B cell (primary cell): ENCODE measurements at regions of chr2 and their contacts with region 1.

Region 1: DNA sequence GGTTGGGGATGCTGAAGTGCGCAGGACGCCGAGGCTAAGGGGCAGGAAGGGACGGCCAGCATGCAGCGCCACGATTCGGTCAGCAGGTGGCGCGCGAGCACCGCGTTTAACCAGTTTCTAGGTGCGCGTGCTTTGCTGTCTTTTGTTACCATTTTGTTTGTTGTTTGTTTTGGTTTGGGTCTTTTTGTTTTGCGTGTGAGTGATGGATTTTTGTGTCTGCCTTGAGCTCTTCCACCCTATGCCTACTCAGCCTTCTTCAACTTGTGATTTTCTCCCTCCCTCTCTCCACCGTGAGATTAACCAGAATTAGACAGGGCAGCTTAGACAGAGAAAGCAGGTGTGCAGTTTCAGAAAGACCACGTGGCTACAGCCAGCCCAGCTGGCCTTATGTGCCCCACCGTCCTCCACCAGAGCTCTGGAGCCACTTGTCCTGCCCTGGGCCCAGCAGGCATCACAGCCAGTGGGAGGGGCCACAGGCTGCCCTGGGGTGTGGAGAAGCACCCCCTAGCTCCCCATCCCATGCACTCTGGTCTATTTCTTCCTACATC is 180.2 kb downstream of the RNF144A start:
- DNase-seq: peak; percentile 73
- ATAC-seq: peak; percentile 60
- H3K4me3 ChIP-seq: no peak overlapping the region
- H3K4me3 Mint-ChIP-seq: peak overlapping the region; percentile 38
- H3K27ac ChIP-seq: no peak overlapping the region
- H3K27ac Mint-ChIP-seq: no peak overlapping the region
- H3K4me1 ChIP-seq: peaks cover 4 to 5% of the 10 kb centered on the region in 2 donors
- H3K4me1 Mint-ChIP-seq: peaks cover 10% of the 10 kb centered on the region
- H3K27me3 ChIP-seq: peaks cover 0 to 3% (median 0%) of the 10 kb centered on the region in 4 experiments
- H3K27me3 Mint-ChIP-seq: peaks cover 22% of the 10 kb centered on the region
- CTCF ChIP-seq: peak; percentile 100

Region 2: DNA sequence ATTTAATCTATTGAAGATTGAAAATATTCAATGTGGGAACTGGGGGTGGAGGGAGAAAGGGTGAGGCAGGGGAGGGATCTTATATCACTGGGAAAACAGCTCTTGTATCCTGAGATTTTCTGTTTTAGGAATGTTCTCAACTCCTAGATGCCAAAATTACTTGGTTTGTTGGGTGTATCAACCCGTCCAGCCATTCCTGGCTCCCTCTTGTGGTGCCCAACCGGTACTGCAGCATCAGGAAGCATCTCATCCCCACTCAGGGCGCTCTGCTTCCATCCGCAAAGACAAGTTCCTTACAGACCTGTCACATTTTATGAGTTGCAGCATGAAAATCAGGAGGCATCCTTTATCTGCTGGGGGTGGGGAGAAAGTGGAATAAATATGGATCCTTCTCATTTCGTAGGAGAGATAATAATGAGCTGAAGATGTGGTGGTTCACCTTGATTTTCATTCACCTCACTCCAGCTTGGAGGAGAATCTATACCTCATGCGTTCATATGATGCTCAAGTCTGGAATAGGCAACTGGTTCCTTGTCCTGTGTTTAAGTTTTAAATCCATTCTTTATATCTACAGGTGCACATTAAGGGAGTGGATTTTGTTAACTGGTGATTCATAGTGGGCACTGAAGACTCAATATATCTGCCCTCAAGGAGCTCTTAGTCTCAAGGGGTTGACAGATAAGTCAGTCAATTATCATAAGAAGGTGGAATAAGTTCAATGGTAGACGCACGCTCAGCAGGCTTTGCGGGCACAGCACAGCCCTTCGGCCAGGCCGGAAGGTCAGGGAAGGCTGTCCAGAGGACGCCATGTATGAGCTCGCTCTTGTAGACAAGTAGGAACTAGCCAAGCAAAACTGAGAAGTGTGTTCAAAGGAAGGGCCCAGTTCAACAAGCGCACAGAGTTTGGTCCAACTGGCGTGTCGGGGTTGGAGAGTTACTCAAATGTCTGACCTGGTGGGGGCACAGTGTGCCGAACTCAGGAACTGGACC is 52.9 kb before region 1 on chr2:
- CTCF ChIA-PET with region 1: interaction called, 12 read pairs
- POLR2A ChIA-PET with region 1: no interaction called
- intact Hi-C with region 1: no loop called
- DNase-seq: peak; percentile 64
- ATAC-seq: peak; percentile 56
- H3K4me3 ChIP-seq: no peak overlapping the region
- H3K4me3 Mint-ChIP-seq: no peak overlapping the region
- H3K27ac ChIP-seq: no peak overlapping the region
- H3K27ac Mint-ChIP-seq: no peak overlapping the region
- H3K4me1 ChIP-seq: peaks cover 4 to 6% of the 10 kb centered on the region in 2 donors
- H3K4me1 Mint-ChIP-seq: peaks cover 7% of the 10 kb centered on the region
- H3K27me3 ChIP-seq: peaks cover 0 to 16% (median 7%) of the 10 kb centered on the region in 4 experiments
- H3K27me3 Mint-ChIP-seq: peaks cover 32% of the 10 kb centered on the region
- CTCF ChIP-seq: peak; percentile 98

Region 3: DNA sequence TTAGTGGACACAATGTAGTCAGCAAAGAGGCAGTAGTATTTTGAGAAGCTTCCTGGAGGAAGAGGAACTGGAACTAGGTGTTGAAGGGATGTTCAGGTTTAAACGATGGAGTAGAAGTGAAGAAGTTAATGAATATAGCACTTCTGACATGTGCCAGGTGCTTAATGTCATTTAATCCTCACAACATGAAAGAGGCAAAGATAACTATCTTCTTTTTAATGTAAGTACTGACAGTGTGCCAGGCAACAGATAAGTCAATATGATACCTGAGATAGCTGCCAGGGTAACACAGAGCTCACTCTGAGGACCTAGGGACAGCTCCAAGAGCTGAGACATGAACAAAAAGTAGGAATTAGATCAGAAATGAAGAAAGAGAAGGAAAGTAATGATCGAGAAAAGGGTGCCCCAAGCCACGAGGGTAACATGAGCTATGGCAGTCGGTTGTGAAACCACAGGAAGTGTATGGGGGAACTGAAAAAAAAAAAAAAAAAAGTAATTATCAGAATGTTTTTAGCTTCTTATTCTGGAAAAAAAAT is 39.5 kb before region 1 on chr2:
- CTCF ChIA-PET with region 1: interaction called, 10 read pairs
- POLR2A ChIA-PET with region 1: no interaction called
- intact Hi-C with region 1: no loop called
- DNase-seq: peak; percentile 47
- ATAC-seq: peak; percentile 72
- H3K4me3 ChIP-seq: peak overlapping the region in 3 of 5 experiments; percentile 22 to 36 (median 28)
- H3K4me3 Mint-ChIP-seq: peak overlapping the region; percentile 78
- H3K27ac ChIP-seq: peak overlapping the region in 1 of 2 donors; percentile 62
- H3K27ac Mint-ChIP-seq: peak overlapping the region; percentile 77
- H3K4me1 ChIP-seq: peaks cover 46 to 71% of the 10 kb centered on the region in 2 donors
- H3K4me1 Mint-ChIP-seq: peaks cover 24% of the 10 kb centered on the region
- H3K27me3 ChIP-seq: peaks cover 0 to 11% (median 4%) of the 10 kb centered on the region in 4 experiments
- H3K27me3 Mint-ChIP-seq: peaks cover under 1% of the 10 kb centered on the region
- CTCF ChIP-seq: no peak

Region 4: DNA sequence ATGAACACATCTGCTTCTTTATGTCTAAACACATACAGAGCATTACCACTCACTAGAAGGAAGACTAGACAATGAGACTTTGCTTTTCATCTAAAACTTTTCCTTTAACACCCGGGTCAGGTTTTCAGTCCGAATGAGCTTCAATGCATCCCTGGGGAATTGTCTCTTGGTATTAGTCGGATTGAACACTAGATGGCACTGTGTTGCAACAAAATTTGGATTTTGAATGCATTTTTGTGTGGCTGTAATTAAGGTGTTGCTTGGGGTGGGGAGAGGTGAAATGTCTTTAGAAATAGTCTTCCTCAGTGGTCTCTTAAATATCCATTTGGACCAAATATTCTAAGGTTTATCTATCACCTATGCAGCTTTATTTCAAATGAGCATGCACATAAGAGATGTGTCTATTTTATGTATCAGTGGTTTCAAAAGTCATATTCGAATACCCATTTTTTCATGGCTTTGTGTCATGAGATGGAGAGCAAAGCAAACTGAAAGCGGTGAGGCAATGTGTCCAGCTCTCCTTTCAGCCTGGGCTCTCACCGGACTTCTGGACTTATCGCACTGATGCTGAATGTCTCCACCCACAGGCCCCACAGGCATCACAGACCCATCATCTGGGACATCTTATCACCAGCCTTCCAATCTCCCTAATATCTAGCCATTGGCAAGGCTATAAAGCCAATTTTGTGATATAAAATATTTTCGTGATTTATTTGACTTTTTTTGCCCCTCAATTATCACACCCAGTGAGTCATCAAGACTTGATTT is 330.1 kb after region 1 on chr2:
- CTCF ChIA-PET with region 1: interaction called, 13 read pairs
- POLR2A ChIA-PET with region 1: no interaction called
- intact Hi-C with region 1: loop called (anchors 5 kb)
- DNase-seq: peak; percentile 73
- ATAC-seq: peak; percentile 31
- H3K4me3 ChIP-seq: no peak overlapping the region
- H3K4me3 Mint-ChIP-seq: no peak overlapping the region
- H3K27ac ChIP-seq: no peak overlapping the region
- H3K27ac Mint-ChIP-seq: no peak overlapping the region
- H3K4me1 ChIP-seq: peaks cover 11 to 14% of the 10 kb centered on the region in 2 donors
- H3K4me1 Mint-ChIP-seq: peaks cover 7% of the 10 kb centered on the region
- H3K27me3 ChIP-seq: peaks cover 0 to 43% (median 11%) of the 10 kb centered on the region in 4 experiments
- H3K27me3 Mint-ChIP-seq: peaks cover 57% of the 10 kb centered on the region
- CTCF ChIP-seq: peak; percentile 81

Region 5: DNA sequence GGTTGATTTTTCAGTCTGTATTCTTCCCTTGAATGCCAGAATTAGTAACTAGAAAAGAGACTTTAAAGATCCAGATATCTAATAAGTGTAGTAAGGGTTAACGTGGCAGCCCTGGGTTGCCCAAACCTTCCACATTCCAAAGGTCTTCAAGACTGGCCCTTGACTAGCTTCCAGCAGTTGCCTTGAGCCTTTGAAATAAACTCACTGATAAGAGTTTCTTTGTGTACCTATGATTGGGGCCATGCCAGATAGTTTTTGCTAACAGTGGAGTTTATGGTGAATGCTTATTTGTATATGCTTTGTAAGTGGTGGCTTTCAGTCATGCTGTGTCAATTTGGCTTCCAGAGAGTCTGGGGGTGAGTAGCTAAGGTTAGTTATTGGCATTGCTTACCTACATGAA is 542.1 kb after region 1 on chr2:
- CTCF ChIA-PET with region 1: no interaction called
- POLR2A ChIA-PET with region 1: no interaction called
- intact Hi-C with region 1: no loop called
- DNase-seq: no peak
- ATAC-seq: no peak
- H3K4me3 ChIP-seq: no peak overlapping the region
- H3K4me3 Mint-ChIP-seq: no peak overlapping the region
- H3K27ac ChIP-seq: no peak overlapping the region
- H3K27ac Mint-ChIP-seq: no peak overlapping the region
- H3K4me1 ChIP-seq: no peaks in the 10 kb centered on the region
- H3K4me1 Mint-ChIP-seq: no peaks in the 10 kb centered on the region
- H3K27me3 ChIP-seq: no peaks in the 10 kb centered on the region
- H3K27me3 Mint-ChIP-seq: peaks cover 10% of the 10 kb centered on the region
- CTCF ChIP-seq: no peak

Region 6: DNA sequence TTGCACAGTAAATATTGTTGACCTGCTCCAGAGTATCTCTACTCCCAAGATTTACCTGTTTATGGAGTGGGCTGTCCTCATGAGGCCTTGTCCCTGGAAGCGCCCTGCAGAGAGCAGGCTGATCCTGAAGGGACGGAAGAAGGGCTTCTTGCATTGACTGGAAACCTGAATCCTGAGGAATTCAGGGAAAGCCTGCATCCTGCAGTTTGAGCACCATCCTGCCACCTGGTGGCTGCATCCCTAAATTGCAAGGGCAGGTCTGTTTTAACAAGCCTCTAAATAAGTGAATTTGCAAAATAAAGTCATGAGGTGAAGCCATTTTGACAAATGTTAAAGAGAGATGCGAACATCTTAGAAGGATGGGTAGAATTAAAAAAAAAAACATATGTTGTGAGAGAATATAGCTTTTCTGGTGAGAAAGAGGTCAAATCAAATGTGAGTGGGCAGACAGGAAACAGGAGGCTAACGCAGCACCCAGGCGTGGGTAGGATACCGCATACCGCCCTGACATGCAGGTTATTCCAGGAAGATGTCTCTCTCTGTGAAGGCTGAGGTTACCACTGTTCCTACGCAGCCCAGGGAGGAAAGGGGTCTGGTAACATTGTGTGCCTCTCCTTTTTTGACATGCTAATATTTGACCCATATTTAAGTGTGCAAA is 574.7 kb after region 1 on chr2:
- CTCF ChIA-PET with region 1: interaction called, 13 read pairs
- POLR2A ChIA-PET with region 1: no interaction called
- intact Hi-C with region 1: loop called (anchors 2 kb)
- DNase-seq: peak; percentile 23
- ATAC-seq: no peak
- H3K4me3 ChIP-seq: no peak overlapping the region
- H3K4me3 Mint-ChIP-seq: no peak overlapping the region
- H3K27ac ChIP-seq: no peak overlapping the region
- H3K27ac Mint-ChIP-seq: no peak overlapping the region
- H3K4me1 ChIP-seq: no peaks in the 10 kb centered on the region
- H3K4me1 Mint-ChIP-seq: no peaks in the 10 kb centered on the region
- H3K27me3 ChIP-seq: no peaks in the 10 kb centered on the region
- H3K27me3 Mint-ChIP-seq: peaks cover 3% of the 10 kb centered on the region
- CTCF ChIP-seq: peak; percentile 63

Region 7: GRCh38 chr2:8836971-8837794 is 1739.8 kb after region 1 on chr2 and contains the start of gene KIDINS220:
- CTCF ChIA-PET with region 1: no interaction called
- POLR2A ChIA-PET with region 1: no interaction called
- intact Hi-C with region 1: loop called (anchors 5 kb)
- DNase-seq: peak; percentile 92
- ATAC-seq: peak; percentile 98
- H3K4me3 ChIP-seq: peak within 1 kb of the TSS; percentile 36 to 93 (median 84)
- H3K4me3 Mint-ChIP-seq: peak within 1 kb of the TSS; percentile 98
- H3K27ac ChIP-seq: peak within 1 kb of the TSS; percentile 36 to 75
- H3K27ac Mint-ChIP-seq: peak within 1 kb of the TSS; percentile 98
- H3K4me1 ChIP-seq: peaks cover 24 to 25% of the 10 kb centered on the region in 2 donors
- H3K4me1 Mint-ChIP-seq: peaks cover 36% of the 10 kb centered on the region
- H3K27me3 ChIP-seq: no peaks in the 10 kb centered on the region
- H3K27me3 Mint-ChIP-seq: peaks cover 4% of the 10 kb centered on the region
- CTCF ChIP-seq: no peak
- total RNA-seq, gene KIDINS220: 36.6 and 43.6 TPM in 2 replicates